ENCODE measurements at regions of chr6 and their contacts with region 1.

Region 1: GRCh38 chr6:31665501-31666336 is at the start of gene CSNK2B:
- DNase-seq: peak; percentile 99
- ATAC-seq: peak; percentile 85
- H3K4me3 Mint-ChIP-seq: peak within 1 kb of the TSS; percentile 96
- H3K27ac Mint-ChIP-seq: peak within 1 kb of the TSS; percentile 95
- H3K4me1 Mint-ChIP-seq: peaks cover 73% of the 10 kb centered on the region
- H3K27me3 Mint-ChIP-seq: no peaks in the 10 kb centered on the region
- total RNA-seq, gene CSNK2B: 233 to 250 TPM

Region 2: GRCh38 chr6:31308050-31308844 is 357.5 kb before region 1 on chr6:
- CTCF ChIA-PET with region 1: no interaction called
- POLR2A ChIA-PET with region 1: no interaction called
- DNase-seq: peak; percentile 39
- ATAC-seq: peak; percentile 61
- H3K4me3 Mint-ChIP-seq: peak overlapping the region; percentile 43
- H3K27ac Mint-ChIP-seq: no peak overlapping the region
- H3K4me1 Mint-ChIP-seq: peaks cover 4% of the 10 kb centered on the region
- H3K27me3 Mint-ChIP-seq: peaks cover 23% of the 10 kb centered on the region

Region 3: DNA sequence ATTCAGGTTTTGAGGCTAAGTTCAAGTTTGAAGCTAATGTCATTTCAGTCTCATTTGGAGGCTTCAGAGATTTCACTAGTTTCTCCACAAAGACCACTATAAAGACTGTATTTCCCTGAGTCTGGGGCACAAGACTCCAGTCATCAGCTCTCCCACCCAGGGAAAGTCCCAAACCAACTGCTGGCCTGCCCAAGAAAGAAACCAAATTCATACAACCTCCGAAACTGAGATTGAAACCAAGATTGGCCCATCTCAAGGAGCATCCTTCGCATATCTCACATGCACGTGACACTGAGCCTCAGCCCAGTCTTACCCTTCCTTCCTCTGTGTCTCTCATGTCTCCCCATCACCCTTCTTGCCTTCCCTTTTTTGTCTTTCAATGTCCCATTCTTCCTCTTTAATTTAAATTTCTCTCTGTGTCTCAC is 97.2 kb before region 1 on chr6:
- CTCF ChIA-PET with region 1: no interaction called
- POLR2A ChIA-PET with region 1: no interaction called
- DNase-seq: peak; percentile 86
- ATAC-seq: peak; percentile 74
- H3K4me3 Mint-ChIP-seq: peak overlapping the region; percentile 26
- H3K27ac Mint-ChIP-seq: peak overlapping the region; percentile 56
- H3K4me1 Mint-ChIP-seq: peaks cover 63% of the 10 kb centered on the region
- H3K27me3 Mint-ChIP-seq: peaks cover 22% of the 10 kb centered on the region

Region 4: DNA sequence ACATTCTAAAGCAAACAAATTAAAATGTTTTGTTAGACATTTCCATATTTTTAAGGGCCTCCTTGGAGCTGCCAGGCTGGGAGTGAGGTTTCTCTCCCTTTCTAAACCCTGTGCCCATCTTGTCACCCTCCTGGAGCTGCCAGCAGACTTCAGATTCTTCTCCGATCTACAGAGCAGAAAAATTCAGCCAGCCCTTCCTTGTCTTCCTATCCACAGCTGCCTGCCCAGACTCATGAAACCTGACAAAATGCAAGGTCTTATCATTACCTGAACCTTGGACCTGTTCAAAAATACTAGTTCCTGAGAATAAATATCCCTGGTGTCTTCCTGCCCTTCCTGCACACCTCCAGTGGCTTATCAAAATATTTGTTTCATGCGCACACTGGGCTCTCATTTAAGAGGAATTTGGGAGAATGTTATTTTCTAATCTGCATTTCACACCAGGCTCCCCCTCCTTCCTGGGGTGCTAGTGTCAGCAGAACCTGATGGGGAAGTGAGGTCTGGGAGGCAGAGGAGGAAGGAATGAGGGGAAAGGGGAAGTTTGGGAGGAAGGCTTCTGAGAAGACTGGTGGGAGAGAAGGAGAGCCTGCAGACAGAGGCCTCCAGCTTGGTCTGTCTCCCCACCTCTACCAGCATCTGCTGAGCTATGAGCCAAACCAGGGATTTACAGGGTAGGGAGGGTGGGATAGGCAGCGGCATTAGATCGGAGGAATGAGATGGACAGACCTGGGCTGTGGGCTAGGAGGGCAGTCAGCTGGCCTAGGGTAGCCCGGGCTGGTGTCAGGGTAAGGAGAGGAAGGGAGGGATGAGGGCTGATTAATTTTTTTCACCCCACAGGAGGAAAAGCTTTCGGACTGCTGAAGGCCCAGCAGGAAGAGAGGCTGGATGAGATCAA is 50.8 kb before region 1 on chr6 and contains the start of gene AIF1:
- CTCF ChIA-PET with region 1: no interaction called
- POLR2A ChIA-PET with region 1: interaction called, 12 read pairs
- DNase-seq: no peak
- ATAC-seq: no peak
- H3K4me3 Mint-ChIP-seq: peak within 1 kb of the TSS; percentile 94
- H3K27ac Mint-ChIP-seq: peak within 1 kb of the TSS; percentile 96
- H3K4me1 Mint-ChIP-seq: peaks cover 45% of the 10 kb centered on the region
- H3K27me3 Mint-ChIP-seq: no peaks in the 10 kb centered on the region
- total RNA-seq, gene AIF1: 177 TPM

Region 5: DNA sequence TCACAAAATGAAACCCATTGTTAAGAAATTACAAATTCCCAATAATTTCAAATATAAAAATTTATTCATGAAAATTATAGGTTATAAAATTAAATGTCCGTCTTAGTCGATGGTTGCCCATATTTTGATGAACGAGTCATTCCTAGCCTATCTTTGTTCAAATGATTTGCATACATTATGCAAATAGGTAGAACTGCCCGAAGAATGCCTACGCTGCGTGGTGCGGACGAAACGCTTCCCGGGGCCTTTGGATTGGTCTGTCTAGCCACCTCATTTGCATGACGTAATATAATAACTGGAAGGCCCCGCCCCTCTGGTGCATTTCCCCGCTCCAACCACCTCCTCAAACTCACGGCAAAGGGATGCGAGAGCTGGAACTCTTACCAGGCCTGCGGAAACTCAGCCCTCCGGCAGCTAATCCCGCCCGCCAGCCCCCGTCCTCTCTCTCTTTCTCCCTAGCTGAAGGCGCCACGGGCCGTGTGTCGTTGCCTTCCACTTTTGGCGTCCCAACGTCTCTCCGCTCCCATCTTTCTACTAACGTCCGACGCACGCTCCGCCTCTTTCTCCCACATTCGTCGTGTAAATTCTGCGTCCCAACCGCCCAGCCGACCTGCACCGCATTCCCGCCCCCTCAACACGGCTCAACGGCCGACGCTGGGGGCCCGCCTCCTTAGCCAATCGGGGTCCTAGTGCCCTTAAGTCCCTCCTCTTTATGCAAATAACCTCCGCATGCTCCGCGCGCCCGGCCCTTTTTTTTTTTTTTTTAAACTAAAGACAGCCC is 45.7 kb before region 1 on chr6:
- CTCF ChIA-PET with region 1: interaction called, 4 read pairs
- POLR2A ChIA-PET with region 1: interaction called, 14 read pairs
- DNase-seq: peak; percentile 99
- ATAC-seq: peak; percentile 89
- H3K4me3 Mint-ChIP-seq: peak overlapping the region; percentile 93
- H3K27ac Mint-ChIP-seq: peak overlapping the region; percentile 95
- H3K4me1 Mint-ChIP-seq: peaks cover 53% of the 10 kb centered on the region
- H3K27me3 Mint-ChIP-seq: no peaks in the 10 kb centered on the region

Region 6: DNA sequence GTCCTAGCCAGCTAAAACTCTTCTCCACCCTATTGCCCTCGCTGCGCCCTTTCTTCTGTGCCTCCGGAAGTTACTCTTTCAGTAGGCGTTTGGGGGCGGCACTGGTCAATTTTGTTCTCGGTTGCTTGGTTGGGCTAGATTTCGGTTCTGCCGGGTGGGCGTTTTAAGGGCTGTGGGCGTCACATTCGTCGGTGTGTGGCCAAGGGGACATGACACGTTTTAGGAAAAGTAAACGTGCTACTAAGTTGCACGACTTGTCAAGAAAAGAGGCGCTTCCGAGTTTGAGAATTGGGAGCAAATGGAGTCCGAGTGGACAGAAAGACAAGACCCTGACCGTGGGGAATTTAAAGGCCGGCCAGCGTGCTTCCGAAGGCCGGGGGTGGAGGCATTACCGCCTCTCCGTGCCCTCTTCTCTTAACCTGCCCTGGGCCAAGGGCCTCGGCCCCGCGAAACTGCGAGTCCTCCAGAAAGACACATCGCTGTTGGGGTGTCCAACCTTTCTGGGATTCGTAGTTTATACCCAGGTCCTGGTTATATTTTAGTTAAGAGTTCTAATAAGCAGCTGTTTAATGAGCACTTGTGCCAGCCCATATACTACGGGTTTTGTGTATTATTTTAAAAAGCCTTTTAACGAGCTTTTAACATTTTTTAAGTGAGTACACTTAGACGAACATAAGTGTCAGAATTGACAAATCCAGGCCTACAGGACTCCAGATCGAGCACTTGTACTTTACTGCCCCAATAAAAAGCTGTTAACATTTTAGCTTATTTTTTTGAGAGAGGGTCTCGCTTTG is 12.6 kb before region 1 on chr6:
- CTCF ChIA-PET with region 1: interaction called, 34 read pairs
- POLR2A ChIA-PET with region 1: interaction called, 109 read pairs
- DNase-seq: peak; percentile 93
- ATAC-seq: peak; percentile 72
- H3K4me3 Mint-ChIP-seq: peak overlapping the region; percentile 96
- H3K27ac Mint-ChIP-seq: peak overlapping the region; percentile 98
- H3K4me1 Mint-ChIP-seq: peaks cover 66% of the 10 kb centered on the region
- H3K27me3 Mint-ChIP-seq: no peaks in the 10 kb centered on the region

Region 7: GRCh38 chr6:31752739-31753319 is 87.1 kb after region 1 on chr6:
- CTCF ChIA-PET with region 1: no interaction called
- POLR2A ChIA-PET with region 1: no interaction called
- DNase-seq: no peak
- ATAC-seq: no peak
- H3K4me3 Mint-ChIP-seq: no peak overlapping the region
- H3K27ac Mint-ChIP-seq: no peak overlapping the region
- H3K4me1 Mint-ChIP-seq: no peaks in the 10 kb centered on the region
- H3K27me3 Mint-ChIP-seq: no peaks in the 10 kb centered on the region